ENCODE measurements at regions of chr5 and their contacts with region 1.

Region 1: GRCh38 chr5:160082614-160083500 is 36.4 kb downstream of the PWWP2A start:
- DNase-seq: no peak
- ATAC-seq: no peak
- H3K4me3 ChIP-seq: no peak overlapping the region
- H3K27ac ChIP-seq: no peak overlapping the region
- H3K4me1 ChIP-seq: no peaks in the 10 kb centered on the region
- H3K27me3 ChIP-seq: no peaks in the 10 kb centered on the region
- CTCF ChIP-seq: no peak

Region 2: DNA sequence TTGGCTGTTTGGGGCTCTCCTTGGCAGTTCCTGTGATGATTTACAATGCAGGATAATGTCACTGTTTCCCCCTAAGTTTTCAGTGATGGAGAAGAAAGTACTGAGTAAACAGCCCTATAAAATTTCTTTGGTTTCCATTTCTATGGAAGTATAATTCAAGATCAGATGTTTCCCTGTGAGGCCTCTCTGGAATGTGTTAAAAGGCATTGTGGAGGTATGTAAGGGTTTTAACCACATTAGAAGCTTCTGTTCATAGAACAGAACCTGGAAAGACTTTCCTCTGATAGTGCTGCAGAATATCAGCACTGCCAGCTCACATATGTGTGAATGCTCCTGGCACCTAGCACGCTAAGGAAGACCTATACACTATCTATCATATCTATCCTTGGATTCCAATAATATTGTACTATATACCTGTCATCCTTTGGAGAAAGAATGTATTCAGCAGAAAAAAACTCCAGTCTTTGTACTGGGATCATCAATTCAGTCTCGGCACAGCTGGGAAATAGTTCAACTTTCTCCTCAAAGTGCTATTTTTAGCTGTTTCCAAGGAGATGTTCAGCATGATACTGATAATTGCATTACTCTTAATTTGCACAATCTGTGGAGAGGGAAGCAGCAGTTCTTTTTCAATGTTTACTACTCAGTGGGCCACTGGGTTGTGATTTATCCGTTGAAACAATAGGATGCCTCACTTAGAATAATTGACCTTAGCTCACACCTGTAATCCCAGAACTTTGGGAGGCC is 52.1 kb before region 1 on chr5:
- intact Hi-C with region 1: loop called in 1 of 2 experiments (anchors 10 kb)
- DNase-seq: no peak
- ATAC-seq: peak in 1 of 4 donors; percentile 22
- H3K4me3 ChIP-seq: no peak overlapping the region
- H3K27ac ChIP-seq: no peak overlapping the region
- H3K4me1 ChIP-seq: no peaks in the 10 kb centered on the region
- H3K27me3 ChIP-seq: no peaks in the 10 kb centered on the region
- CTCF ChIP-seq: no peak

Region 3: DNA sequence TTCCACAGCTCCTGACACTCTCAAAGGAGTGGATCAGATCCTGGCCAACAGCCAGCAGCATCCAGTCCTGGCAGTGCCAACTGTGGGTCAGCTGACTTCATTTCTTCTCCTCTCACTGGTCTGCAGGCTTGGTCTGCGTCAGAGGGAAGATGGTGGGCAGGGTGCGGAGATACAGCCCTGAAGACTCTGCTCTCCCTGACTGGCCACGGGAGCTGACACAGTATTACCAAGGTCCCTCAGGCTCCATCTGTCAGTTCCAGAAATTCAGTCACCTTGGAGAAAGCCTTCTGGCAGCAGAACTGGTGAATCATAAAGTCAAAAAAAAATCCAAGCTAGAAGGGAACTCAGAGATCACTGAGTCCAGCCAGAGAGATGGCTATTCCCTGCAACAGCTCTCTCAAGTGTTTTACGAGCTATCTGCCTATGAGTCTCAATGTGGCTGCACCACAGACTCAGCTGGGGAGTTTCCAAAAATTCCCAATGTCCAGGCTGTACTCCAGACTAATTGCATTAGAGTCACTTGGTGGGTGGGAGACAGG is 259.6 kb after region 1 on chr5:
- intact Hi-C with region 1: loop called in 1 of 2 experiments (anchors 5 kb)
- DNase-seq: peak in 1 of 2 donors; percentile 21
- ATAC-seq: peak in 3 of 4 donors; percentile 33 to 43 (median 35)
- H3K4me3 ChIP-seq: no peak overlapping the region
- H3K27ac ChIP-seq: no peak overlapping the region
- H3K4me1 ChIP-seq: no peaks in the 10 kb centered on the region
- H3K27me3 ChIP-seq: no peaks in the 10 kb centered on the region
- CTCF ChIP-seq: no peak

Measured in psoas muscle (tissue), 8 donors.